Activated CD8-positive, alpha-beta T cell treated with anti-CD3 and anti-CD28 coated beads, Interleukin-2, amount 10 ng/mL, durations not matched to agents 7 days and 5 days (primary cell): ENCODE measurements at regions of chr1 and their contacts with region 1.

Region 1: DNA sequence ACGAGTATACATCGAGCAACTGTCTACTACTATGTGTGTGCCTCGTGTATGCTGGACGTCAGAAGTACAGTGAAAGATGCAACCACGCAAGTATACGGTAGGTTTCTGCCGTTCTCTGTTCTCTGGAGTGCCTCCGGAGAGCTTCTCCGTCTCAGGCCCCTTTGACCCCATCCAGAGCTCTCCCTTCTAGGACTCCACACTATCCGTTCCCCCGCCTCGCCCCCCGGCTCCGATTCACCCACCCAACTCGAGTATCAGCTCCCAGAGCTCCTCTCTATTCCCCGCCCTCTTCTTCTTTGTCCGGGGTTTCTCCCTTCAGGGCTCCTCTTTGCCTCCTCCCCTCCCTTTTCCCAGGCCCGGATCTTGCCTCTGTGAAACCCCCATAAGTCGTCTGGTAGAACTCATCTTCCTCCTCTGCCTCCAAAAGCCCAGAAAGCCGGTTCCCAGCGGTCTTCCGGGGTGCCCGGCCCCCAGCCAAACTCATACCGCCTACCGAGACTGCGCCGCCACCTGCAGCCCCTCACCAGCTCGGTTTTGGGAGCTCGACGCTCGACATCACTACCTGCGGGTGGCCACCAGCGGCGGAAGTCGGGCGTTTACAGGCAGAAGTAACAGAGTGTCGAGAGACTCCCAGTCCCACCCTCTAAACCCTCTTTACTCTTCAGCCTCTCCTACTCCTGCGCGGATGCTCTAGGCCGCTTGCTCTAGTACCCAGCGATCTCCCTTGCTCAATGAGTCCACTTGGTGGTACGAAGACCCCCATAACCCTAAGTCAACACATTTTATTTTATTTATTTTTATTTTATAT is at the start of gene VPS72:
- DNase-seq: peak; percentile 92
- ATAC-seq: peak; percentile 96
- H3K4me3 Mint-ChIP-seq: peak within 1 kb of the TSS; percentile 100
- H3K27ac Mint-ChIP-seq: peak within 1 kb of the TSS; percentile 99
- H3K4me1 Mint-ChIP-seq: peaks cover 28% of the 10 kb centered on the region
- H3K27me3 Mint-ChIP-seq: peaks cover 3% of the 10 kb centered on the region
- total RNA-seq, gene VPS72: 59.8 to 61.7 TPM

Region 2: GRCh38 chr1:151085953-151086559 is 103.8 kb before region 1 on chr1:
- CTCF ChIA-PET with region 1: no interaction called
- POLR2A ChIA-PET with region 1: no interaction called
- DNase-seq: no peak
- ATAC-seq: no peak
- H3K4me3 Mint-ChIP-seq: no peak overlapping the region
- H3K27ac Mint-ChIP-seq: no peak overlapping the region
- H3K4me1 Mint-ChIP-seq: no peaks in the 10 kb centered on the region
- H3K27me3 Mint-ChIP-seq: no peaks in the 10 kb centered on the region

Region 3: DNA sequence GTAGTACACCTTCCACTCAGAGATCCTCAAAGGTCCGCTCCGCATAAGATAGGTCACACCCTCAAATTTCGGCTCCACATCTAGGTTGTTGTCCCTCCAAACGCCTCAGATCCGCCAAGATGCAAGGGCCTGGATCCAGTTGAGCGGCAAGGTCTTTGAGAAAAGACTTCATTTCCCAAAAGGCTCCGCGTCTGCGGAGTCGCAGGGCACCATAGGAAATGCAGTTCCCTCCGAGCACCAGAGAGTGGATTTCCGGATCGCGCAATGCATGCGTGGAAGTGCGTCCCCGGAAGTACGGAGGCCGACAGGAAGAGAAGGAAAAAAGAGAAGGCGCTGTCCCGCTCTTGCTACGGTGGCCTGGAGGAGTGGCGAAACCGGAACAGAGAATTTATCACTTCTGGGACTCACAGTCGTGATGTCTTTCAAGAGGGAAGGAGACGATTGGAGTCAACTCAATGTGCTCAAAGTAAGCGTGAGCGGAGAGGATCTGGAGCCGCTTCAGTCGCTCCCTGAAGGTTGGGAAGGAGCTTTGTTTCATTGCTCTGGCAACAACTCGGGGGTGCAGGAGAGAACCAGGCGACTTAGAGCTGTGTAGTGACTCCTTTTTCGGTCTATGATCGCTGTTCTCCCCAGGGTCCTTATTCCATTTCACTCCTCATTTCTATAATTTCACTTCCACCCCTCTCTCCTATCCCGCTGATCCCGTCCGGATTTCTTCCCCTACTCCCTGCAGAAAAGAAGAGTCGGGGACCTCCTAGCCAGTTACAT is 23.9 kb before region 1 on chr1 and contains the starts of genes LYSMD1 and SCNM1:
- CTCF ChIA-PET with region 1: interaction called, 3 read pairs
- POLR2A ChIA-PET with region 1: interaction called, 13 read pairs
- DNase-seq: peak; percentile 98
- ATAC-seq: peak; percentile 95
- H3K4me3 Mint-ChIP-seq: peak within 1 kb of the TSS; percentile 92
- H3K27ac Mint-ChIP-seq: peak within 1 kb of the TSS; percentile 94
- H3K4me1 Mint-ChIP-seq: peaks cover 40% of the 10 kb centered on the region
- H3K27me3 Mint-ChIP-seq: no peaks in the 10 kb centered on the region
- total RNA-seq, gene LYSMD1: 3.7 to 4.3 TPM
- total RNA-seq, gene SCNM1: 53.0 to 55.9 TPM

Region 4: GRCh38 chr1:151175910-151176309 is 13.9 kb before region 1 on chr1 and contains the start of gene TMOD4:
- CTCF ChIA-PET with region 1: interaction called, 18 read pairs
- POLR2A ChIA-PET with region 1: interaction called, 13 read pairs
- DNase-seq: no peak
- ATAC-seq: peak; percentile 78
- H3K4me3 Mint-ChIP-seq: no peak within 1 kb of the TSS
- H3K27ac Mint-ChIP-seq: no peak within 1 kb of the TSS
- H3K4me1 Mint-ChIP-seq: no peaks in the 10 kb centered on the region
- H3K27me3 Mint-ChIP-seq: no peaks in the 10 kb centered on the region
- total RNA-seq, gene TMOD4: 2.2 to 3.4 TPM